ENCODE measurements at regions of chr3 and their contacts with region 1.

Region 1: GRCh38 chr3:38843898-38844297 is 27.9 kb upstream of the SCN10A start:
- DNase-seq: peak; percentile 60
- ATAC-seq: peak; percentile 97
- H3K4me3 ChIP-seq: no peak overlapping the region
- H3K27ac ChIP-seq: no peak overlapping the region
- H3K4me1 ChIP-seq: no peaks in the 10 kb centered on the region
- H3K27me3 ChIP-seq: peaks cover 21% of the 10 kb centered on the region
- CTCF ChIP-seq: peak; percentile 47 to 74 (median 62)
- POLR2A ChIP-seq: no peak
- RAD21 ChIP-seq: peak; percentile 83

Region 2: DNA sequence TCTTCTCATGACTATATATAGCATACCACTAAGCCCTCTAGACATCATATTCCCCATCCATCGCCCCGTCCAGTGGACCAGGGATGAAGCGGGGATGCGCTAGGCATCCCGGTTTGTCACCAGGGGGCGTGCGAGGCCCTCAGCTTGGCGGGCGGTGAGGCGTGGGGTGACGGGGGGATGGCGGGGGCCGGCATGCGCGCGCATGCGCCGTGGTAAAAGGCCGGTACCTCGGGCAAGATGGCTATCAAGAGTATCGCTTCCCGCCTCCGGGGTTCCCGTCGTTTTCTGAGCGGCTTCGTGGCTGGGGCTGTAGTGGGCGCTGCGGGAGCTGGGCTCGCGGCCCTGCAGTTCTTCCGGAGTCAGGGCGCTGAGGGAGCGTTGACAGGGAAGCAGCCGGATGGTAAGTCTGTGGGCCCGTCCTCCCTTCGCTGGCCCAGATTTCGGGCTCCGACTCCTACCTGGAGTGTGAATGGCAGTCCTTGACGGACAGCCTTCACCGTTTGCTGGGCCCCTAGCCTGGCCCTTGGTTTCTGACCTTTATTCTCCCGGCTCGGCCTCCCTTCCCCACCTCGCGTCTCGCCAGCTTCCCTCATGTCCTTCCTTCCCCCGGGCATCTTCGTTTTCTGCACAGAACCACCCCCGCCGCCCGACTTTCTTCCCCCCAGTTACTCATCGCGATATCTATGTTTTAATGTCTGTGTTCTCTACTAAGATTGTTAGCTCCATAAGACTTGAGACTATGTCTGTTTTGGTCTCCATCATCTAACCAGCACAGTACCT is 347.6 kb before region 1 on chr3 and contains the start of gene EXOG:
- CTCF ChIA-PET with region 1: no interaction called
- POLR2A ChIA-PET with region 1: no interaction called
- RAD21 ChIA-PET with region 1: no interaction called
- intact Hi-C with region 1: loop called (anchors 1 kb)
- DNase-seq: peak; percentile 78
- ATAC-seq: peak; percentile 96
- H3K4me3 ChIP-seq: peak within 1 kb of the TSS; percentile 77 to 88
- H3K27ac ChIP-seq: peak within 1 kb of the TSS; percentile 76
- H3K4me1 ChIP-seq: peaks cover 4 to 7% of the 10 kb centered on the region in 2 experiments; a peak in 3 of 4 replicates
- H3K27me3 ChIP-seq: no peaks in the 10 kb centered on the region
- CTCF ChIP-seq: peak; percentile 87 to 88 (median 88)
- POLR2A ChIP-seq: peak; percentile 49
- RAD21 ChIP-seq: peak; percentile 77
- total RNA-seq, gene EXOG: 8.3 TPM

Region 3: GRCh38 chr3:38521391-38521987 is 322.4 kb before region 1 on chr3:
- CTCF ChIA-PET with region 1: interaction called, 19 read pairs
- POLR2A ChIA-PET with region 1: no interaction called
- RAD21 ChIA-PET with region 1: interaction called, 3 to 4 read pairs
- intact Hi-C with region 1: loop called (anchors 1 kb)
- DNase-seq: peak; percentile 62
- ATAC-seq: peak; percentile 78
- H3K4me3 ChIP-seq: no peak overlapping the region
- H3K27ac ChIP-seq: no peak overlapping the region
- H3K4me1 ChIP-seq: no peaks in the 10 kb centered on the region
- H3K27me3 ChIP-seq: no peaks in the 10 kb centered on the region
- CTCF ChIP-seq: peak; percentile 81 to 91 (median 85)
- POLR2A ChIP-seq: no peak
- RAD21 ChIP-seq: peak; percentile 81

Region 4: GRCh38 chr3:38651154-38651789 is 192.6 kb before region 1 on chr3:
- CTCF ChIA-PET with region 1: interaction called, 16 read pairs
- POLR2A ChIA-PET with region 1: no interaction called
- RAD21 ChIA-PET with region 1: interaction called in 1 of 2 experiments, 3 read pairs
- intact Hi-C with region 1: loop called (anchors 2 kb)
- DNase-seq: peak; percentile 60
- ATAC-seq: peak; percentile 62
- H3K4me3 ChIP-seq: no peak overlapping the region
- H3K27ac ChIP-seq: no peak overlapping the region
- H3K4me1 ChIP-seq: peaks cover 11 to 31% of the 10 kb centered on the region in 2 experiments
- H3K27me3 ChIP-seq: no peaks in the 10 kb centered on the region
- CTCF ChIP-seq: peak; percentile 80 to 98 (median 85)
- POLR2A ChIP-seq: no peak
- RAD21 ChIP-seq: peak; percentile 80

Region 5: DNA sequence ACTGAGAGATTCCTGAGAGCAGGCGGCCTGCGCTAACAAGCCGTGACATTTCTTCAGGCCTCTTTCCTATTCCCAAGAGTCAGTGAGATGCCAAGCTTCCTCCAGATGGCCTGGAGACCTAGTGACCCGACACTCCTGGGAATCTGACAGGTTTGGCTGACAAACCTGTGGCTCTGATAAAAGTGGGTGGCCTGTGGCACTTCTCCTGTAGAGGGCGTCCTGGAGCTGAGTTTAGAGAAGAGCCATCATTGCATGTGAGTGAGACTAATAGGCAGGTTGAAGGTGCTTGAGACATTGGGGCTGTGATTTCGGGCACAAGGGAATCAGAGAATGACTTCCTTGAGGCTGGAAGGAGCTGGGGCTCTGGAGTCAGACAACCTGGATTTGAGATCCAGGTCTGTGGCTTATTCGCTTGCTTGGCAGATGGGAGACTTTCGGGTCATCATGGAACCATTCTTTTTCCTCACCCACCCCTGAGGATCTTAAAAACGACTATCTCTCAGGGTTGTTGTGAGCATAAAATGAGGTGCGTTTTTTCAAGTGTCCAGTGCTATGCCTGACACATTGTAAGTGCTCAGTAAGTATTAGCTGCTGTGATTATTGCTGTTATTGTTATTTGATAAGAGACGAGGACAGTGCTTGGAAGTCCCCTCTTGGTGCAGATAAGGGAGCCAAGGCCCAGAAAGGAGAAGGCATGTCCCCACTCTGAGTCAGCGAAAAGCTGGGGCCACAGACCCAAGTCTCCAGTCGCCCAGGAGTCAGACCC is 105.1 kb before region 1 on chr3:
- CTCF ChIA-PET with region 1: interaction called, 18 read pairs
- POLR2A ChIA-PET with region 1: no interaction called
- RAD21 ChIA-PET with region 1: interaction called in 1 of 2 experiments, 3 read pairs
- intact Hi-C with region 1: loop called (anchors 2 kb)
- DNase-seq: peak; percentile 47
- ATAC-seq: peak; percentile 94
- H3K4me3 ChIP-seq: no peak overlapping the region
- H3K27ac ChIP-seq: no peak overlapping the region
- H3K4me1 ChIP-seq: no peaks in the 10 kb centered on the region
- H3K27me3 ChIP-seq: peaks cover 10% of the 10 kb centered on the region; the same call in 1 of the 2 replicates
- CTCF ChIP-seq: peak; percentile 87 to 94 (median 94)
- POLR2A ChIP-seq: no peak
- RAD21 ChIP-seq: peak; percentile 79

Region 6: GRCh38 chr3:38952721-38953120 is 108.8 kb after region 1 on chr3:
- CTCF ChIA-PET with region 1: no interaction called
- POLR2A ChIA-PET with region 1: no interaction called
- RAD21 ChIA-PET with region 1: no interaction called
- intact Hi-C with region 1: no loop called
- DNase-seq: no peak
- ATAC-seq: no peak
- H3K4me3 ChIP-seq: no peak overlapping the region
- H3K27ac ChIP-seq: no peak overlapping the region
- H3K4me1 ChIP-seq: no peaks in the 10 kb centered on the region
- H3K27me3 ChIP-seq: peaks cover 6% of the 10 kb centered on the region; the same call in 1 of the 2 replicates
- CTCF ChIP-seq: no peak
- POLR2A ChIP-seq: no peak
- RAD21 ChIP-seq: no peak

Measured in HCT116 (cell line).